ENCODE measurements at regions of chr11 and their contacts with region 1.

Region 1: DNA sequence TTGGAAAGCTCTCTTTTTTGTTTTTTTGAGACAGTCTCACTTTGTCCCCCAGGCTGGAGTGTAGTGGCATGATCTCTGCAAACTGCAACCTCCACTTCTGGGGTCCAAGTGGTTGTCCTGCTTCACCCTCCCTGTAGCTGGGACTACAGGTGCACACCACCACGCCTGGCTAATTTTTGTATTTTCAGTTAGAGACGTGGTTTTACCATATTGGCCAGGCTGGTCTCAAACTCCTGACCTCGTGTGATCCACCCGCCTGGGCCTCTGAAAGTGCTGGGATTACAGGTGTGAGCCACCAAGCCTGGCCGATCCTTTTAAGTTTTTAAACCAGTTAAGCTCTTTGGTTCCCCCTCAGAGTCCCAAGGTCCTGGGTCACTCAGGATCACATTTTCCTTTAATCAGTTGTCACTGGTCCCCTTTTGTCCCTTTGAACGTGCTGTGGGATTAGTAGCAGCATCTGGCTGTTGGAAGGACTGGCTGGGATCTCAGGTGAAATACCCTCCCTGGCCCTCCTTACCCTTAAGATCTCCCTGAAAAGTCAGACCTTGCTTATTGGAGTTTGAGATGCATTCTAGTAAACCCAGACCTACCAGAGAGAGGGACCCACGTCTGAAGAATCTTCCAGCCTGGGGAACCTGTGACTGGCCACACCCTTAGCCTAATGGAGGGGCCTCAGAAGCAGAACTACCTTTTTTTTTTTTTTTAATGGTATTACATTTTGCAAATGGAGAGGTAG is 8.1 kb downstream of the MALAT1 start:
- DNase-seq: peak; percentile 93
- ATAC-seq: peak; percentile 61
- H3K4me3 ChIP-seq: peak overlapping the region; percentile 78 to 99
- H3K27ac ChIP-seq: peak overlapping the region; percentile 100
- H3K4me1 ChIP-seq: peaks cover 30% of the 10 kb centered on the region
- H3K27me3 ChIP-seq: no peaks in the 10 kb centered on the region
- CTCF ChIP-seq: no peak

Region 2: GRCh38 chr11:64894070-64894796 is 612.7 kb before region 1 on chr11:
- CTCF ChIA-PET with region 1: no interaction called
- POLR2A ChIA-PET with region 1: no interaction called
- in situ Hi-C with region 1: no loop called
- intact Hi-C with region 1: no loop called
- DNase-seq: no peak
- ATAC-seq: peak; percentile 88
- H3K4me3 ChIP-seq: no peak overlapping the region
- H3K27ac ChIP-seq: no peak overlapping the region
- H3K4me1 ChIP-seq: peaks cover 12% of the 10 kb centered on the region
- H3K27me3 ChIP-seq: no peaks in the 10 kb centered on the region
- CTCF ChIP-seq: peak; percentile 99

Region 3: GRCh38 chr11:65182258-65183170 is 324.4 kb before region 1 on chr11:
- CTCF ChIA-PET with region 1: no interaction called
- POLR2A ChIA-PET with region 1: no interaction called
- in situ Hi-C with region 1: no loop called
- intact Hi-C with region 1: no loop called
- DNase-seq: no peak
- ATAC-seq: peak; percentile 59
- H3K4me3 ChIP-seq: peak overlapping the region; percentile 79 to 95
- H3K27ac ChIP-seq: peak overlapping the region; percentile 93
- H3K4me1 ChIP-seq: peaks cover 16% of the 10 kb centered on the region
- H3K27me3 ChIP-seq: no peaks in the 10 kb centered on the region
- CTCF ChIP-seq: no peak

Region 4: GRCh38 chr11:65366340-65366773 is 140.6 kb before region 1 on chr11:
- CTCF ChIA-PET with region 1: no interaction called
- POLR2A ChIA-PET with region 1: interaction called, 4 read pairs
- in situ Hi-C with region 1: no loop called
- intact Hi-C with region 1: loop called (anchors 1 kb)
- DNase-seq: peak; percentile 60
- ATAC-seq: peak; percentile 92
- H3K4me3 ChIP-seq: no peak overlapping the region
- H3K27ac ChIP-seq: peak overlapping the region; percentile 59
- H3K4me1 ChIP-seq: peaks cover 7% of the 10 kb centered on the region
- H3K27me3 ChIP-seq: no peaks in the 10 kb centered on the region
- CTCF ChIP-seq: peak; percentile 96

Region 5: GRCh38 chr11:65418711-65419459 is 88.1 kb before region 1 on chr11:
- CTCF ChIA-PET with region 1: interaction called, 8 read pairs
- POLR2A ChIA-PET with region 1: interaction called, 32 read pairs
- in situ Hi-C with region 1: no loop called
- intact Hi-C with region 1: loop called (anchors 5 kb)
- DNase-seq: peak; percentile 98
- ATAC-seq: peak; percentile 51
- H3K4me3 ChIP-seq: peak overlapping the region; percentile 3 to 38
- H3K27ac ChIP-seq: peak overlapping the region; percentile 100
- H3K4me1 ChIP-seq: peaks cover 71% of the 10 kb centered on the region
- H3K27me3 ChIP-seq: no peaks in the 10 kb centered on the region
- CTCF ChIP-seq: no peak

Region 6: GRCh38 chr11:65454696-65455456 is 52.1 kb before region 1 on chr11:
- CTCF ChIA-PET with region 1: no interaction called
- POLR2A ChIA-PET with region 1: interaction called, 10 read pairs
- in situ Hi-C with region 1: no loop called
- intact Hi-C with region 1: loop called (anchors 5 kb)
- DNase-seq: no peak
- ATAC-seq: peak; percentile 96
- H3K4me3 ChIP-seq: peak overlapping the region; percentile 54 to 90
- H3K27ac ChIP-seq: peak overlapping the region; percentile 92
- H3K4me1 ChIP-seq: peaks cover 26% of the 10 kb centered on the region
- H3K27me3 ChIP-seq: no peaks in the 10 kb centered on the region
- CTCF ChIP-seq: no peak

Region 7: GRCh38 chr11:65477149-65477965 is 29.6 kb before region 1 on chr11:
- CTCF ChIA-PET with region 1: interaction called, 17 read pairs
- POLR2A ChIA-PET with region 1: interaction called, 818 read pairs
- in situ Hi-C with region 1: no loop called
- intact Hi-C with region 1: loop called (anchors 5 kb)
- DNase-seq: no peak
- ATAC-seq: peak; percentile 80
- H3K4me3 ChIP-seq: peak overlapping the region; percentile 60 to 68
- H3K27ac ChIP-seq: peak overlapping the region; percentile 100
- H3K4me1 ChIP-seq: peaks cover 75% of the 10 kb centered on the region
- H3K27me3 ChIP-seq: no peaks in the 10 kb centered on the region
- CTCF ChIP-seq: no peak

Region 8: DNA sequence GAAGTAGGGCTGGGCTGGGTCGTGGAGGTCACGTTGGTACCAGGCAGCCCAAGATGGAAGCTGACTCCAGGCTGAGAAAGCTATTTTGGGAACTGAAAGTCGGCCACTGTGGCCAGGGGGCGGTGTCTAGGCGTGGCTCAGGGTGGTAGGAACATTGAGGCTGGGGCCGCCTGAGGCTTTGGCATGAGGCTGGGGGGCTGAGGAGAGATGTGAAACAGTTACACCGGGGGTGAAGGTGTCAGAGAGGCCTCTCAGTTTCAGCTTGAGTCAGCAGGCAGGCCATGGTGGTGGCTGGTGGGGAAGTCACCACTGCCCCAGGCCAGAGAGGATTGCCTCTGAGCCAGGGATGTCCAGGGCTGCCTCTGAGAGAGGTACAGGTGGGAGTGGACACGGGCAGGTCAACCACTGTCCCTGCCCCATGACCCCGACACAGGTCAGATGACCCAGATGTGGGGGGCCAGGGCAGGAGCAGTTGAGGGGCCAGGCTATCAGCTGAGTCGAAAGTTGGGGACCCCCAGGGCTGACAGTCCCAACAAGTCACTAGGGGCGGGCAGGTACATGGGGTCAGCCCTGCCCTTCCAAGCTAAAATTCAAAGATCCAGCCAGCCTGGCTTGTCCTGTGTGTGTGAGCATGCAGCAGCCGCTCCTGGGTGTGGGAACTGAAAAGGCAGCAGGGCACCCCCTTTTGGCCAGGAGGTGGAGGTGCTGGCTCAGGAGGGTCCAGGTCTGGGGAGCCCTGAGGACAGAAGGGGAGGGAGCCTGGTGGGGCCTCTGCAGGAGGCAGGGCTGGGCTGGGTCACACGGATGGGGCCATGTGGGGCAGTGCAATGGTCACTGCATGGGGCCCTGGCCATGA is 81.5 kb after region 1 on chr11:
- CTCF ChIA-PET with region 1: no interaction called
- POLR2A ChIA-PET with region 1: interaction called, 11 read pairs
- in situ Hi-C with region 1: no loop called
- intact Hi-C with region 1: no loop called
- DNase-seq: no peak
- ATAC-seq: peak; percentile 86
- H3K4me3 ChIP-seq: no peak overlapping the region
- H3K27ac ChIP-seq: peak overlapping the region; percentile 36
- H3K4me1 ChIP-seq: peaks cover 17% of the 10 kb centered on the region
- H3K27me3 ChIP-seq: no peaks in the 10 kb centered on the region
- CTCF ChIP-seq: no peak; the same call in 1 of the 2 replicates

Region 9: DNA sequence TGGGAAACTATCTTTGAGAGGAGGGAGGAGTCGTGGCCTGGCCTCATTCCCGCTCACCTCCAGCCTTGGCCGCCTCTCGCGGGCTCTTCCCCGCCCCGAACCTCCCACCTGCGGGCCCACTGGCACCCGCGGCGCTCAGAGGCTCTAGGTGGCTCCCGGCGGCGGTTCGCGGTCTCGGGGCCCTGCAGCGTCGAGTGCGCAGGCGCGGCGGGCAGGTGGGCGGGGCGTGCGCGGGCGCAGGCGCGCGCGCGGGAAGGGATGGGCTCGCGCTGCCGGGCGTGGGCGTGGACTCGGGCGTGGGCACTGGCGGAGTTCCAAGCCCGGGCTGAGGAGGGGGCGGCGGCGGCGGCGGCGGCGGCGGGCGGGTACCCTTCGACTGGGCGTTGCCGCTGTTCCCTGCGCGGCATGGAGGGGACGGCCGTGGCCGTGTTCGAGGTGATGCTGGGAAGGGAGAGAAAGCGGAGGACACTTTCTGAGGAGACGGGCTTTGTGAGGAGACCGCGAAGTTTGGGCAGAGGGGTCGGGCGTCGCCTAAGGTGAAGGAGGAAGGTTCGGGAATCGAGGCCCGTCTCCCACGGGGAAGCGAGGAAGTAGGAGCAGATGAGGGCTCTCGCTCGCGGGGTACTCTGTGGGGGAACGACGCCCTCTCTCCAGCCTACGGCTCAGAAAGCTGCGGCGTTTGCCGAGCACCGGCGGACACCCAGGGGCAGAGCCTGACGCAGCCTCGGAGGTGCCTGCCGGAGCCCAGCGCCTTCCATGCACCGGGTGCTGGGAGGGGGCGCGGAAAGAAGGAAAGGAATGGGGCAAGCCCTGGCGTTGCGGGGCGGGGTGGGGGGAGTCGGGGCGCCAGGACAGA is 1237.8 kb after region 1 on chr11:
- CTCF ChIA-PET with region 1: no interaction called
- POLR2A ChIA-PET with region 1: no interaction called
- in situ Hi-C with region 1: no loop called
- intact Hi-C with region 1: no loop called
- DNase-seq: no peak
- ATAC-seq: peak; percentile 89
- H3K4me3 ChIP-seq: peak overlapping the region; percentile 85 to 87
- H3K27ac ChIP-seq: peak overlapping the region; percentile 90
- H3K4me1 ChIP-seq: peaks cover 4% of the 10 kb centered on the region
- H3K27me3 ChIP-seq: no peaks in the 10 kb centered on the region
- CTCF ChIP-seq: no peak